ENCODE measurements at regions of chr19 and their contacts with region 1.

Region 1: GRCh38 chr19:41363753-41364523 is at the start of gene B9D2:
- DNase-seq: peak; percentile 96
- ATAC-seq: peak; percentile 90
- H3K4me3 Mint-ChIP-seq: peak within 1 kb of the TSS; percentile 98
- H3K27ac Mint-ChIP-seq: peak within 1 kb of the TSS; percentile 99
- H3K4me1 Mint-ChIP-seq: peaks cover 25% of the 10 kb centered on the region
- H3K27me3 Mint-ChIP-seq: no peaks in the 10 kb centered on the region
- total RNA-seq, gene B9D2: 11.5 to 13.0 TPM

Region 2: GRCh38 chr19:41310033-41310758 is 53.7 kb before region 1 on chr19 and contains the start of gene CCDC97:
- POLR2A ChIA-PET with region 1: interaction called, 12 read pairs
- DNase-seq: peak; percentile 93
- ATAC-seq: peak; percentile 62
- H3K4me3 Mint-ChIP-seq: peak within 1 kb of the TSS; percentile 91
- H3K27ac Mint-ChIP-seq: peak within 1 kb of the TSS; percentile 96
- H3K4me1 Mint-ChIP-seq: peaks cover 50% of the 10 kb centered on the region
- H3K27me3 Mint-ChIP-seq: no peaks in the 10 kb centered on the region
- total RNA-seq, gene CCDC97: 37.8 to 40.8 TPM

Region 3: GRCh38 chr19:41327576-41328156 is 36.3 kb before region 1 on chr19:
- POLR2A ChIA-PET with region 1: interaction called, 13 read pairs
- DNase-seq: peak; percentile 87
- ATAC-seq: peak; percentile 58
- H3K4me3 Mint-ChIP-seq: peak overlapping the region; percentile 78
- H3K27ac Mint-ChIP-seq: peak overlapping the region; percentile 87
- H3K4me1 Mint-ChIP-seq: peaks cover 54% of the 10 kb centered on the region
- H3K27me3 Mint-ChIP-seq: no peaks in the 10 kb centered on the region

Region 4: GRCh38 chr19:41353466-41354342 is 10.2 kb before region 1 on chr19 and contains the start of gene TGFB1:
- POLR2A ChIA-PET with region 1: interaction called, 64 read pairs
- DNase-seq: peak; percentile 96
- ATAC-seq: peak; percentile 46
- H3K4me3 Mint-ChIP-seq: peak within 1 kb of the TSS; percentile 97
- H3K27ac Mint-ChIP-seq: peak within 1 kb of the TSS; percentile 97
- H3K4me1 Mint-ChIP-seq: peaks cover 59% of the 10 kb centered on the region
- H3K27me3 Mint-ChIP-seq: no peaks in the 10 kb centered on the region
- total RNA-seq, gene TGFB1: 172 to 179 TPM

Region 5: GRCh38 chr19:41439441-41440222 is 75.7 kb after region 1 on chr19 and contains the start of gene DMAC2:
- POLR2A ChIA-PET with region 1: interaction called, 12 read pairs
- DNase-seq: peak; percentile 89
- ATAC-seq: peak; percentile 96
- H3K4me3 Mint-ChIP-seq: no peak within 1 kb of the TSS
- H3K27ac Mint-ChIP-seq: peak within 1 kb of the TSS; percentile 47
- H3K4me1 Mint-ChIP-seq: peaks cover 12% of the 10 kb centered on the region
- H3K27me3 Mint-ChIP-seq: peaks cover 3% of the 10 kb centered on the region
- total RNA-seq, gene DMAC2: 41.3 to 42.6 TPM